ENCODE measurements at regions of chr7 and their contacts with region 1.

Region 1: DNA sequence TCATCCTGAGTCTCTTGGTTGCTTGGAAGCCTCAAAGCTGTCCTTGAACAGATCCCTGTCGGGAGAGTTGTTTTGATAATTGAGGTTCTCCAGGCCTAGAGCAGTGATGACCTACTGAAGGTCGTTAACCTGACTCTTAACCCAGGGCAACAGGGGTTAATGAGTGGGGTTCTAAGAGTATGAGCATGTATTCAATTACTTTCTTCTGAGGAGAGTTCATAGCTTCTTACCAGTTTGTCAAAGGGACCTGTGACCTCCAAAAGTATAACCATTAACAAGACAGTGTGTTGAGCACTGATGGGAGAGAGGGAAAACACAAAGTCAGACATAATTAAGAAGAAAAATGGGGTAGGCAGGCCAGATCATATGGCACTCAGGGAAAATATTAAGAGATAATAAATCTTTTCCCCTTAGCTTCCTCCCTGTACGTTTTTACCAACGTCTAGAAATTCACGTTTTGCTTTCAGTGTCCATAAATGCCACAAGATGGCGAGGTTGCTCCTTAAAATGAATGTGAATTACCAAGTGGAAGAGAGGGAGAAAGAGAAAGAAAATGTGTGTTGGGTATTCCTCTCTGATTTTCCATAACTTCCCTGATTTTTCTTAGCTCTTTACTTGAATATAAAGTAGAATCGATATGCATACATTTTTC is 97.6 kb downstream of the SUGCT start:
- DNase-seq: peak; percentile 29
- H3K4me3 ChIP-seq: no peak overlapping the region
- H3K27ac ChIP-seq: no peak overlapping the region
- H3K27me3 ChIP-seq: no peaks in the 10 kb centered on the region
- CTCF ChIP-seq: peak; percentile 66

Region 2: DNA sequence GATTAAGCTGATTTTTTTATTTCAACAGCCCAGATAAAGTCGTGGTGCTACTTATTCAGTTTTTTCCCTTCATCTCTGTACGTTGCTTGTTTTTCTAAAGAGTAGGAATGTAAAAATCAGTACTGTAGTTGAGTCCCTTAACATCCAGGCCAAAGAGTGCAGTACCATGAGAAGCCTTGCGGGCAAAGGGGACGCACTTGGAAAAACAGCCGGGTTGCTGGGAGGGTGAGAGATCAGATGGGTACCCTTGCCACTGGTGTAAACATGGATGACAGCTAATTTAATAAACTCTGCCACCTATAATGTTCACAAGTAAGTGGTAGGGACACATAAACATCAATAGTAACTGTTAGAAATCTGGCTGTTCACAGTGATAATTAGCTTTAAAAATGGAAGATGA is 1078.7 kb before region 1 on chr7:
- CTCF ChIA-PET with region 1: no interaction called
- POLR2A ChIA-PET with region 1: no interaction called
- DNase-seq: no peak
- H3K4me3 ChIP-seq: no peak overlapping the region
- H3K27ac ChIP-seq: no peak overlapping the region
- H3K27me3 ChIP-seq: peaks cover 4% of the 10 kb centered on the region
- CTCF ChIP-seq: no peak

Region 3: DNA sequence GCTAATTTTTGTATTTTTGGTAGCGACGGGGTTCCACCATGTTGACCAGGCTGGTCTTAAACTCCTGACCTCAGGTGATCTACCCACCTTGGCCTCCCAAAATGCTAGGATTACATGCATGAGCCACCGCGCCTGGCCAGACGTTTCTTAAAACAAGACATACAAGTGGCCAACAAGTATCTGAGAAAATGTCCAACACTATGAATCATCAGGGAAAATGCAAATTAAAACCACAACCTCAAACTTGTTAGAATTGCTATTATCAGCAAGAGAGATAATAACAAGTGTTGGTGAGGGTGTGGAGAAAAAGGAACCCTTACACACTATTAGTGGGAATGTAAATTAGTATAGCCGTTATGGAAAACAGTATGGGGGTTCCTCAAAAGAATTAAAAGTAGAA is 51.0 kb after region 1 on chr7:
- CTCF ChIA-PET with region 1: no interaction called
- POLR2A ChIA-PET with region 1: no interaction called
- DNase-seq: no peak
- H3K4me3 ChIP-seq: no peak overlapping the region
- H3K27ac ChIP-seq: no peak overlapping the region
- H3K27me3 ChIP-seq: no peaks in the 10 kb centered on the region
- CTCF ChIP-seq: no peak

Region 4: GRCh38 chr7:40329601-40330153 is 97.3 kb after region 1 on chr7:
- CTCF ChIA-PET with region 1: interaction called, 15 read pairs
- POLR2A ChIA-PET with region 1: no interaction called
- DNase-seq: peak; percentile 32
- H3K4me3 ChIP-seq: no peak overlapping the region
- H3K27ac ChIP-seq: no peak overlapping the region
- H3K27me3 ChIP-seq: no peaks in the 10 kb centered on the region
- CTCF ChIP-seq: peak; percentile 73

Region 5: DNA sequence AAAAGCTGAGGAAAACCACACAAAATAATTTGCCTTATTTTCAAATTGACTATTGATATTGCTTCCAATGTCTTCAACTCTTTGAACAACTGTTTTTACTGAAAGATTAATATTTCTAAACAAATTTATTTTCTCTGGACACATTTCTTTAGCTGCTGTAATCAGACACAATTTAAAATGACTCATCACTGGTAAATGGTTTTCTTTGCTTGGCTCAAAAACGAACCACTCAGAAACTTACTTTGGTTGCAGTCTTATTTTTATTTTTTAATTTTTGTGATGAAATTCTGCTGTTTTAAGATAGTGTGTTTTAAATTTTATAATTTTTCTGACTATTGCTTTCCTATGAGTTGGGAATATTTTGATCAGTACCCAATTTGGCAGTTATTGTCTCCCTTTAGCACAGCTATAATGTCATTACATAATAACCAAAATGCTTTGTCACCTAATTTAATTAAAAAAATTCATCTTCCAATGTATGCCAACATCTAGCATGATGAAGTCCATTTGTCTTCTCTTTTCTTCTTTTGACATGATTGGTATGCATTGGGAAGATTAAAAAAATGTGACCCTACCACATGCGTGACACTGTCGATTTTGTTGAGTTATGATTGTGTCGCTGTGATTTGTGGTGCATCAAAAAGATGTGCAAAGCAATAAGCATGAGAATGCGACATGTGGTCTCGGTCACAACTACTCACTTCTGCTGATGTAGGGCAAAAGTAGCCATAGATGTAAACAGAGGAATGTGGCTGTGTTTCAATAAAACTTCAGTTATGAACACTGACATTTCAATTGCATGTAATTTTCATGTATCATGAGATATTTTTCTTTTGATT is 124.7 kb after region 1 on chr7:
- CTCF ChIA-PET with region 1: no interaction called
- POLR2A ChIA-PET with region 1: no interaction called
- DNase-seq: no peak
- H3K4me3 ChIP-seq: no peak overlapping the region
- H3K27ac ChIP-seq: no peak overlapping the region
- H3K27me3 ChIP-seq: no peaks in the 10 kb centered on the region
- CTCF ChIP-seq: no peak

Region 6: DNA sequence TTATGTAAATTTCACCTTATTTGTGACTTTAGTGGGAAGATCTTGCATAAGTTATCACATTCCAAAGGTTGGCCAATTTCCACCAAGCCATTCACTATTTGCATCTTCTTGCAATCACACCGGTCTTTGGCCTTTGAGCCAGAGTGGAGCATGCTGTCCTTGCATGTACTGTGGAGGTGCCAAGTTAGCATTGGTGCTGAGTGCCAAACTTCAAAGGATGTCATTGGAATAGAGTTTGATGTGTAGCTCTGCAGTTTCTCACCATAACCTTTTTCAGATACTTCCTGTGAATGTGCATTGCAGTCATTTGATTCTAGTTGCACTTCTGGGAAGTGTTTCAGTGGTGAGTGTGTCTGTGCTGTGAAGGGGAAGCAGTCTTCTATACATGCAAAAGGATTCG is 523.1 kb after region 1 on chr7:
- CTCF ChIA-PET with region 1: interaction called, 59 read pairs
- POLR2A ChIA-PET with region 1: no interaction called
- DNase-seq: no peak
- H3K4me3 ChIP-seq: no peak overlapping the region
- H3K27ac ChIP-seq: no peak overlapping the region
- H3K27me3 ChIP-seq: no peaks in the 10 kb centered on the region
- CTCF ChIP-seq: no peak

Region 7: GRCh38 chr7:40827217-40828085 is 595.1 kb after region 1 on chr7:
- CTCF ChIA-PET with region 1: interaction called, 14 read pairs
- POLR2A ChIA-PET with region 1: no interaction called
- DNase-seq: no peak
- H3K4me3 ChIP-seq: no peak overlapping the region
- H3K27ac ChIP-seq: peak overlapping the region; percentile 91
- H3K27me3 ChIP-seq: no peaks in the 10 kb centered on the region
- CTCF ChIP-seq: no peak

Region 8: DNA sequence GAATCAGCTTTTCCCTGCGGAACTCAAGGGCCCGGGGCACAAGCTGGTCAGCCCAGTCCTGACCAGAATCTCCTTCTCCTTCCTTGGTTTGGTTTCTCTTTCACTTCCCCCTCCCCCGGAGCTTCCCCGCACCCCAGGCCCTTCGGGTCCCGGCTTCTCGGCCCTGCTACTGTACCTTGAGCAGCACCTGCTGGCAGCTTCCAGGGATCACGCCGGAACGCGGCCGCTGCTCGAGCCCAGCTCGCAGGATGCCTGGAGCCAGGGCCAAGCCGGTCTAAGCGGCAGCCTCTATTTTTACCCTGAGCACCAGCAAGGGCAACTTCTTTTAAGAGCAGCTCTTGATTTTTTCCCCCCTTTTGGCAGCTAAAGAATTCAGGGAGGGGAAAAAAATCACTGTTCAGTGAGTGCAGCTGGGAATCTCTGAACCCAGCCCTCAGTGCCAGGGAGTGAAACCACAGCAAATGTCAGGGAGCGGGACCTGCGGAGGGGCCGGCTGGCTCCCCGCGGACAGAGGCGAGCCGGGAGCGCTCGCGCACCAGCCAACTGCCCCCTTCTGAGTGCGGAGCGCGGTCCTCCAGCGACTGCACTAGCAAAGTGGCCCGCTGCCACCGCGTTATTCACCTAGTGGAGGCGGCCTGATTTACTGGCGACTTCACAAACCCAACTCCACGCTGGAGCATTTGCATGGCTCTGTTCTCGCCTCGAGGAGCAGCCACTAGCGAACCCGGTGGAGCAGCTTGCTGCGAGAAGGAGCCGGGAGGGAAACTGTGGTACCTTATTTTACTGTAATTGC is 1472.9 kb after region 1 on chr7:
- CTCF ChIA-PET with region 1: interaction called, 30 read pairs
- POLR2A ChIA-PET with region 1: no interaction called
- DNase-seq: peak; percentile 88
- H3K4me3 ChIP-seq: peak overlapping the region; percentile 68
- H3K27ac ChIP-seq: peak overlapping the region; percentile 91
- H3K27me3 ChIP-seq: no peaks in the 10 kb centered on the region
- CTCF ChIP-seq: peak; percentile 89

Measured in AG04450 (cell line).